ENCODE measurements at regions of chr4 and their contacts with region 1.

Region 1: DNA sequence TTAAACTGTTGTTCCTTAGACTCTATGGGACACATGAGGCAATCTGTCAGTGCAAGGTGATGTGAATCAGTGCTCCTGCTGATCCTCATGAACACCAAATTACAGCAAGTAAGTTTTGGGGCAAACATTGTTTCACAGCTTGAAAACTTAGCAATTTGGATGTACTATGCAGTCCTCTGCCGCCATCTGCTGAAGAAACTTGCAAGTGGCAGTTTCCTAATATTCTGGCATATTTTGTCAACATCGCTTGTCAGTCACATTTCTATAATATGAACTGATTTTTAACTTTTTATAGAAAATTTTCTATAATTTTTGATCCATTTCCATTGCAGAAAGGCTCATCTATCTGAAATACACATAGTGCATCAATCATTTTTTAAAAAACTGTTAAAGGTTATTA is 56.3 kb downstream of the ZAR1 start:
- DNase-seq: peak; percentile 8
- ATAC-seq: peak; percentile 34; the same call in 1 of the 3 replicates
- H3K4me3 ChIP-seq: no peak overlapping the region
- H3K27ac ChIP-seq: no peak overlapping the region
- H3K4me1 ChIP-seq: no peaks in the 10 kb centered on the region
- H3K27me3 ChIP-seq: no peaks in the 10 kb centered on the region
- CTCF ChIP-seq: peak; percentile 57 to 70 (median 63); a peak in 5 of 6 replicates
- EP300 ChIP-seq: no peak
- POLR2A ChIP-seq: no peak
- RAD21 ChIP-seq: peak; percentile 80

Region 2: GRCh38 chr4:48127682-48128394 is 418.5 kb before region 1 on chr4:
- CTCF ChIA-PET with region 1: no interaction called
- POLR2A ChIA-PET with region 1: no interaction called
- RAD21 ChIA-PET with region 1: no interaction called
- SMC1A ChIA-PET with region 1: interaction called, 3 read pairs
- in situ Hi-C with region 1: loop called (anchors 5 kb)
- intact Hi-C with region 1: no loop called
- DNase-seq: peak; percentile 81
- ATAC-seq: peak; percentile 92
- H3K4me3 ChIP-seq: no peak overlapping the region
- H3K27ac ChIP-seq: no peak overlapping the region
- H3K4me1 ChIP-seq: peaks cover 15% of the 10 kb centered on the region
- H3K27me3 ChIP-seq: no peaks in the 10 kb centered on the region
- CTCF ChIP-seq: peak; percentile 64 to 71 (median 66)
- EP300 ChIP-seq: no peak
- POLR2A ChIP-seq: 0 out of 2 replicates have a peak, but pooled peaks have one; percentile 32
- RAD21 ChIP-seq: peak; percentile 85

Region 3: GRCh38 chr4:48315728-48316630 is 230.4 kb before region 1 on chr4:
- CTCF ChIA-PET with region 1: interaction called, 13 read pairs
- POLR2A ChIA-PET with region 1: no interaction called
- RAD21 ChIA-PET with region 1: no interaction called
- SMC1A ChIA-PET with region 1: interaction called, 5 read pairs
- in situ Hi-C with region 1: no loop called
- intact Hi-C with region 1: loop called (anchors 1 kb)
- DNase-seq: no peak
- ATAC-seq: peak; percentile 89
- H3K4me3 ChIP-seq: no peak overlapping the region
- H3K27ac ChIP-seq: no peak overlapping the region
- H3K4me1 ChIP-seq: no peaks in the 10 kb centered on the region
- H3K27me3 ChIP-seq: no peaks in the 10 kb centered on the region
- CTCF ChIP-seq: peak; percentile 66 to 79 (median 70); a peak in 5 of 6 replicates
- EP300 ChIP-seq: no peak
- POLR2A ChIP-seq: no peak
- RAD21 ChIP-seq: peak; percentile 72

Region 4: DNA sequence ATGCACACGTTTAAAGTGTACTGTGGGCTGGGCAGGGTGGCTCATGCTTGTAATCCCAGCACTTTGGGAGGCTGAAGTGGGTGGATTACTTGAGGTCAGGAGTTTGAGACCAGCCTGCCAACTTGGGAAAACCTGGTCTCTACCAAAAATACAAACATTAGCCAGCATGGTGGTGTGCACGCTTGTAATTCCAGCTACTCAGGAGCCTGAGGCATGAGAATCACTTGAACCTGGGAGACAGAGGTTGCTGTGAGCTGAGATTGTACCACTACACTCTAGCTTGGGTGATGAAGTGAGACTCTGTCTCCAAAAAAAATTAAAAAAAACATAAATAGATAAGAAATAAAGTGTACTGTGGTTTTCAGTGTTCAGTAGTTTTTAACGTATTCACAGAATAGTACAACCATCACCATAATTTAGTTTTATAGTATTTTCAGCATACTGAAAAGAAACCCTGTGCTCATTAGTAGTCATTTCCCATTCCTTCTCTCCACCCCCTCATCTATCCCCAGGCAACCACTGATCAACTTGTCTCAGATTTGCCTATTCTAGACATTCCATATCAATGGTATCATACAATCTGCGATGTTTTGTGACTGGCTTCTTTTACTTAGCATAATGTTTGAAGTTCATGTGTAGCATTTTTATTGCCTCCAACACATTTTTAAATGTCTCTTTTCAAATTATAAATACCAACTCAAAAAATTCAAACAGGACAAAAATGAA is 185.9 kb before region 1 on chr4:
- CTCF ChIA-PET with region 1: no interaction called
- POLR2A ChIA-PET with region 1: no interaction called
- RAD21 ChIA-PET with region 1: no interaction called
- SMC1A ChIA-PET with region 1: no interaction called
- in situ Hi-C with region 1: no loop called
- intact Hi-C with region 1: no loop called
- DNase-seq: no peak
- ATAC-seq: no peak
- H3K4me3 ChIP-seq: no peak overlapping the region
- H3K27ac ChIP-seq: no peak overlapping the region
- H3K4me1 ChIP-seq: no peaks in the 10 kb centered on the region
- H3K27me3 ChIP-seq: no peaks in the 10 kb centered on the region
- CTCF ChIP-seq: no peak
- EP300 ChIP-seq: no peak
- POLR2A ChIP-seq: no peak
- RAD21 ChIP-seq: no peak

Region 5: GRCh38 chr4:48445704-48446103 is 100.6 kb before region 1 on chr4:
- CTCF ChIA-PET with region 1: interaction called, 18 read pairs
- POLR2A ChIA-PET with region 1: no interaction called
- RAD21 ChIA-PET with region 1: no interaction called
- SMC1A ChIA-PET with region 1: interaction called, 4 read pairs
- in situ Hi-C with region 1: no loop called
- intact Hi-C with region 1: loop called (anchors 5 kb)
- DNase-seq: no peak
- ATAC-seq: peak; percentile 49; the same call in 1 of the 3 replicates
- H3K4me3 ChIP-seq: no peak overlapping the region
- H3K27ac ChIP-seq: no peak overlapping the region
- H3K4me1 ChIP-seq: no peaks in the 10 kb centered on the region
- H3K27me3 ChIP-seq: no peaks in the 10 kb centered on the region
- CTCF ChIP-seq: peak in 1 of 3 experiments; percentile 31; a peak in 2 of 6 replicates
- EP300 ChIP-seq: no peak
- POLR2A ChIP-seq: no peak
- RAD21 ChIP-seq: peak; percentile 53

Region 6: DNA sequence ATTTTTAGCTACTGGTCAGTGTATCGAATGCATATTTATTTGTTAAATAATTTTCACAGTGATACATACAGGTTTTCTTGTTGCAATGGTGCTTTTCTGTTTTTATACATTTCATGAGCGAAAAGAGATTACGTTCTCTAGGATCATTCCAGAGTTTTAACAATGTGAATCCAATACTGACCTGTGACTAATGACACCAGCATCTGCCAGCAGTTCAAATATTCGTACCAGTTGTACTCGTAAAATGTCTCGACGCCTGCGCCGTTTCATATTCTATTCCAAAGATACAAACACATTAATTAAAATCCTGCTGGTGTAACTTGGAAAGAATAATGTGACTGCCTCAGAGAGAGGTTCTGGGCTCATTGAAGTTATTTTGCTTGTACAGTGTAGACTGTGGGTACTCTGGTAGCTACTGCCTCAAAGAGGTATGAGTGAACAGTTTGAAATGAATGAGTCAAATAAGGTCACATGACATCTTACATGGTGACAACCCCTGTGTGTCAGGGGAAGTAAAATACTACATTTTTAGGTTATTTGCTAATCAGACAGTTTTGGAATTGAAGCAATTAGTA is 24.4 kb after region 1 on chr4:
- CTCF ChIA-PET with region 1: no interaction called
- POLR2A ChIA-PET with region 1: no interaction called
- RAD21 ChIA-PET with region 1: no interaction called
- SMC1A ChIA-PET with region 1: no interaction called
- in situ Hi-C with region 1: no loop called
- intact Hi-C with region 1: no loop called
- DNase-seq: no peak
- ATAC-seq: no peak
- H3K4me3 ChIP-seq: no peak overlapping the region
- H3K27ac ChIP-seq: no peak overlapping the region
- H3K4me1 ChIP-seq: peaks cover 5% of the 10 kb centered on the region; the same call in 1 of the 2 replicates
- H3K27me3 ChIP-seq: no peaks in the 10 kb centered on the region
- CTCF ChIP-seq: no peak
- EP300 ChIP-seq: no peak
- POLR2A ChIP-seq: no peak
- RAD21 ChIP-seq: no peak